Activated naive CD4-positive, alpha-beta T cell treated with anti-CD3 and anti-CD28 coated beads, Interleukin-2, amount 10 ng/mL, durations not matched to agents 7 days and 5 days (primary cell): ENCODE measurements at regions of chr6 and their contacts with region 1.

Region 1: GRCh38 chr6:157527471-157527907 is 146.5 kb downstream of the ZDHHC14 start:
- DNase-seq: peak; percentile 61
- H3K4me3 Mint-ChIP-seq: no peak overlapping the region
- H3K27ac Mint-ChIP-seq: peak overlapping the region; percentile 88
- H3K4me1 Mint-ChIP-seq: peaks cover 27% of the 10 kb centered on the region
- H3K27me3 Mint-ChIP-seq: no peaks in the 10 kb centered on the region

Region 2: GRCh38 chr6:157548635-157549467 is 21.4 kb after region 1 on chr6:
- CTCF ChIA-PET with region 1: no interaction called
- DNase-seq: peak; percentile 33
- H3K4me3 Mint-ChIP-seq: no peak overlapping the region
- H3K27ac Mint-ChIP-seq: no peak overlapping the region
- H3K4me1 Mint-ChIP-seq: peaks cover 25% of the 10 kb centered on the region
- H3K27me3 Mint-ChIP-seq: peaks cover 24% of the 10 kb centered on the region

Region 3: GRCh38 chr6:157597446-157598312 is 70.2 kb after region 1 on chr6:
- CTCF ChIA-PET with region 1: interaction called, 10 read pairs
- DNase-seq: peak; percentile 65
- H3K4me3 Mint-ChIP-seq: no peak overlapping the region
- H3K27ac Mint-ChIP-seq: no peak overlapping the region
- H3K4me1 Mint-ChIP-seq: no peaks in the 10 kb centered on the region
- H3K27me3 Mint-ChIP-seq: peaks cover 4% of the 10 kb centered on the region

Region 4: GRCh38 chr6:157632821-157633220 is 105.3 kb after region 1 on chr6:
- CTCF ChIA-PET with region 1: no interaction called
- DNase-seq: no peak
- H3K4me3 Mint-ChIP-seq: no peak overlapping the region
- H3K27ac Mint-ChIP-seq: no peak overlapping the region
- H3K4me1 Mint-ChIP-seq: peaks cover 6% of the 10 kb centered on the region
- H3K27me3 Mint-ChIP-seq: peaks cover 4% of the 10 kb centered on the region